ENCODE measurements at regions of chr17 and their contacts with region 1.

Region 1: GRCh38 chr17:11404431-11405276 is 163.6 kb downstream of the SHISA6 start:
- DNase-seq: no peak
- ATAC-seq: no peak
- H3K4me3 ChIP-seq: no peak overlapping the region
- H3K27ac ChIP-seq: no peak overlapping the region
- H3K4me1 ChIP-seq: no peaks in the 10 kb centered on the region
- H3K27me3 ChIP-seq: no peaks in the 10 kb centered on the region
- CTCF ChIP-seq: no peak
- EP300 ChIP-seq: no peak
- POLR2A ChIP-seq: no peak
- RAD21 ChIP-seq: no peak

Region 2: GRCh38 chr17:11023639-11024479 is 380.8 kb before region 1 on chr17:
- CTCF ChIA-PET with region 1: no interaction called
- POLR2A ChIA-PET with region 1: no interaction called
- RAD21 ChIA-PET with region 1: no interaction called
- SMC1A ChIA-PET with region 1: no interaction called
- in situ Hi-C with region 1: loop called (anchors 25 kb)
- intact Hi-C with region 1: no loop called
- DNase-seq: no peak
- ATAC-seq: no peak
- H3K4me3 ChIP-seq: no peak overlapping the region
- H3K27ac ChIP-seq: no peak overlapping the region
- H3K4me1 ChIP-seq: no peaks in the 10 kb centered on the region
- H3K27me3 ChIP-seq: no peaks in the 10 kb centered on the region
- CTCF ChIP-seq: no peak
- EP300 ChIP-seq: no peak
- POLR2A ChIP-seq: no peak
- RAD21 ChIP-seq: no peak

Region 3: DNA sequence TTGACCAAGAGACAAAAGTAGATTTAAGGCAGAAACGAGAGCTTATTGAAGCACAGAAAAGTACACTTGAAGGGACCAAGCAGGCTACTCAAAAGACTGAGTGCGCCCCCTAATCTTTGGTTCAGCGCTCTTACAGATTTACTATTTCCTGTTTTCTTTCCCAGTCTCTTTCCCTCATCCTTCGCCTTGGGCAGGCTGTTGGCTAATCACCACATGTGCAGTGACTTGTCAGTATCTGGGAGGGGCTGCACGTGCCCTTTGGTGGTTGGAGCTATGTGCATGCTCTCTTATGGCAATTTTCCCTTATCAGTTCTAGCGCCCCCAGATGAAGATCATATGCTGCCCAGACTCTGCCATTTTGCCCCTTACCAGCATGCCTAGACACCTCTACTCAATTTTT is 199.0 kb before region 1 on chr17:
- CTCF ChIA-PET with region 1: no interaction called
- POLR2A ChIA-PET with region 1: no interaction called
- RAD21 ChIA-PET with region 1: no interaction called
- SMC1A ChIA-PET with region 1: no interaction called
- in situ Hi-C with region 1: loop called (anchors 25 kb)
- intact Hi-C with region 1: no loop called
- DNase-seq: no peak
- ATAC-seq: no peak
- H3K4me3 ChIP-seq: no peak overlapping the region
- H3K27ac ChIP-seq: no peak overlapping the region
- H3K4me1 ChIP-seq: no peaks in the 10 kb centered on the region
- H3K27me3 ChIP-seq: no peaks in the 10 kb centered on the region
- CTCF ChIP-seq: no peak
- EP300 ChIP-seq: no peak
- POLR2A ChIP-seq: no peak
- RAD21 ChIP-seq: no peak

Region 4: DNA sequence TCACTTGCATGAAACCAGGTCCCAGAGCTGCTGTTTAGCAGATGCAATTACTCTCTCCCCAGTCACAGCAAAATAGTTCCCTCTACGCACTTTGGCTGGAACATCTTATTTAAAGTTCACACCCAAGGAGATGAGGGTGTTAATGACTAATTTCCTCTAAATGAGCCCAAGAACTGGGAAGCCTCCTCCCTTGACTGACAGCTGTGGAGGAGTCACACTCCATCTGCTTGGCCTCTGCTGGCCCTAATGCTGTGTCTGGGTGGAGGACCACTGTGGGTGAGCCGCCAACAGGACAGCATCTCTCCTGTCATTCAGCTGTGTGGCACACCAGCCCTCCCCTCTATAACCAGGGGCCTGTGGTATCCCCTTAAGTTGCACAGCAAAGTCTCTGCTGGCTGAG is 48.3 kb before region 1 on chr17:
- CTCF ChIA-PET with region 1: no interaction called
- POLR2A ChIA-PET with region 1: no interaction called
- RAD21 ChIA-PET with region 1: no interaction called
- SMC1A ChIA-PET with region 1: no interaction called
- in situ Hi-C with region 1: loop called (anchors 5 kb)
- intact Hi-C with region 1: no loop called
- DNase-seq: no peak
- ATAC-seq: no peak
- H3K4me3 ChIP-seq: no peak overlapping the region
- H3K27ac ChIP-seq: no peak overlapping the region
- H3K4me1 ChIP-seq: no peaks in the 10 kb centered on the region
- H3K27me3 ChIP-seq: no peaks in the 10 kb centered on the region
- CTCF ChIP-seq: no peak
- EP300 ChIP-seq: no peak
- POLR2A ChIP-seq: no peak
- RAD21 ChIP-seq: no peak

Measured in GM12878 (cell line).